Activated CD4-positive, alpha-beta T cell treated with anti-CD3 and anti-CD28 coated beads for 36 hours (primary cell): ENCODE measurements at regions of chr1 and their contacts with region 1.

Region 1: GRCh38 chr1:6613361-6614018 is at the start of gene PHF13:
- DNase-seq: peak; percentile 100
- ATAC-seq: peak; percentile 98
- H3K4me3 Mint-ChIP-seq: peak within 1 kb of the TSS; percentile 80
- H3K27ac Mint-ChIP-seq: peak within 1 kb of the TSS; percentile 87
- H3K4me1 Mint-ChIP-seq: peaks cover 20% of the 10 kb centered on the region
- H3K27me3 Mint-ChIP-seq: no peaks in the 10 kb centered on the region
- total RNA-seq, gene PHF13: 13.2 to 13.6 TPM

Region 2: DNA sequence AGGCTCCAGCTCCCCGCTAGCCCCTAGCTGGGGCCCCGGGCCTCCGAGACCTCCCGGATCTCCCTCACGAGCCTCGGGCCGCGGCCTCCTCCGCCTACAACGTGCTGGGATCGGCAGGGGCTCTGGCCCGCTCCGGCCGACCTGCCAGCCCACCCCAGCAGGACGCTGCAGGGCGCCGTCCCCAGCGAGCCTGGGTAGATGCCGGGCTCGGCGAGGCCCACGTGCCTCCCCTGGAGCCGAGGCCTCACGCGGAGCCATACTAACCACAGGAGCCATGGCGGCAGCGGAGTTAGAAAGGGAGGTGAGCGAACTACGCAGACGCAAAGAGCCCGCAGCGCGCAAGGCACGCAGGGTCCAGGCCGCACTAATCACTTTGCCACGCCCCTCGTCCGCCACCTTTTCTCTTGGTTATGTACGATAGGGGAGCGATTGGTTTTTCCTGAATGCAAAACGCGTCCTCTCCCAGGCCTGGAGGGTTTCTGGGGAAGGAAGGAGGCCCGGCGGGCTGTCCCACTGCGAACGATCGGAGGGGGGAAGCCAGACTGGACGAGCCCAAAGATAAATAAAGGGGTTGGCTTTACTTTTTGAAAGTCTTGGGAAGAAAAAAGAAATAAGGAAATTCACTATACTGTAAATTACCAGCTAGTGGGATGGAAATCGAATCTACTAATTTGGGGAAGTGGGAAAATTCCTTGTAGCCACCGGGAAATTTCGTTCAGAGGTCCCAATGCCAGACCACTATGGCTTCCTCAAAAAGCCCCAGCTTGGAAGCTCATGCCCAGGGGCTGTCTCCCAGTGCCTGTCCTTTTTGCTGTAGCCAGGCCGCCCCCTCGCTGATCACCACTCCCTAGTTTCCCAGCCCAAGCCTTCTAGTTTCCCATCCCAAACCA is 413.9 kb before region 1 on chr1 and contains the start of gene RPL22:
- CTCF ChIA-PET with region 1: no interaction called
- POLR2A ChIA-PET with region 1: no interaction called
- intact Hi-C with region 1: loop called in 1 of 2 experiments (anchors 1 kb)
- DNase-seq: peak; percentile 99
- ATAC-seq: peak; percentile 99
- H3K4me3 Mint-ChIP-seq: peak within 1 kb of the TSS; percentile 99
- H3K27ac Mint-ChIP-seq: peak within 1 kb of the TSS; percentile 96
- H3K4me1 Mint-ChIP-seq: peaks cover 39% of the 10 kb centered on the region
- H3K27me3 Mint-ChIP-seq: no peaks in the 10 kb centered on the region
- total RNA-seq, gene RPL22: 392 to 475 TPM

Region 3: GRCh38 chr1:6438047-6438525 is 175.4 kb before region 1 on chr1:
- CTCF ChIA-PET with region 1: no interaction called
- POLR2A ChIA-PET with region 1: no interaction called
- intact Hi-C with region 1: no loop called
- DNase-seq: peak; percentile 85
- ATAC-seq: peak; percentile 72
- H3K4me3 Mint-ChIP-seq: no peak overlapping the region
- H3K27ac Mint-ChIP-seq: no peak overlapping the region
- H3K4me1 Mint-ChIP-seq: peaks cover 2% of the 10 kb centered on the region
- H3K27me3 Mint-ChIP-seq: peaks cover 16% of the 10 kb centered on the region

Region 4: GRCh38 chr1:6579374-6580118 is 33.9 kb before region 1 on chr1 and contains the start of gene ZBTB48:
- CTCF ChIA-PET with region 1: interaction called, 3 read pairs
- POLR2A ChIA-PET with region 1: interaction called, 5 read pairs
- intact Hi-C with region 1: loop called in 1 of 2 experiments (anchors 1 kb)
- DNase-seq: peak; percentile 99
- ATAC-seq: peak; percentile 99
- H3K4me3 Mint-ChIP-seq: peak within 1 kb of the TSS; percentile 92
- H3K27ac Mint-ChIP-seq: peak within 1 kb of the TSS; percentile 89
- H3K4me1 Mint-ChIP-seq: peaks cover 30% of the 10 kb centered on the region
- H3K27me3 Mint-ChIP-seq: no peaks in the 10 kb centered on the region
- total RNA-seq, gene ZBTB48: 23.2 to 26.0 TPM

Region 5: GRCh38 chr1:6624710-6625583 is 11.5 kb after region 1 on chr1 and contains the start of gene THAP3:
- CTCF ChIA-PET with region 1: interaction called, 3 read pairs
- POLR2A ChIA-PET with region 1: interaction called, 3 read pairs
- intact Hi-C with region 1: loop called in 1 of 2 experiments (anchors 1 kb)
- DNase-seq: peak; percentile 96
- ATAC-seq: peak; percentile 98
- H3K4me3 Mint-ChIP-seq: peak within 1 kb of the TSS; percentile 85
- H3K27ac Mint-ChIP-seq: peak within 1 kb of the TSS; percentile 78
- H3K4me1 Mint-ChIP-seq: peaks cover 28% of the 10 kb centered on the region
- H3K27me3 Mint-ChIP-seq: no peaks in the 10 kb centered on the region
- total RNA-seq, gene THAP3: 19.4 to 22.1 TPM